B cell (primary cell): ENCODE measurements at regions of chr13 and their contacts with region 1.

Region 1: GRCh38 chr13:27919934-27920676 is at the start of gene PDX1:
- DNase-seq: peak; percentile 55
- ATAC-seq: peak; percentile 44
- H3K4me3 ChIP-seq: peak within 1 kb of the TSS in 4 of 5 experiments; percentile 27 to 61 (median 50)
- H3K4me3 Mint-ChIP-seq: peak within 1 kb of the TSS; percentile 81
- H3K27ac ChIP-seq: no peak within 1 kb of the TSS
- H3K27ac Mint-ChIP-seq: no peak within 1 kb of the TSS
- H3K4me1 ChIP-seq: peaks cover 59 to 75% of the 10 kb centered on the region in 2 donors
- H3K4me1 Mint-ChIP-seq: peaks cover 40% of the 10 kb centered on the region
- H3K27me3 ChIP-seq: peaks cover 0 to 95% (median 76%) of the 10 kb centered on the region in 4 experiments
- H3K27me3 Mint-ChIP-seq: peaks cover 66% of the 10 kb centered on the region
- CTCF ChIP-seq: no peak
- total RNA-seq, gene PDX1: not detected in 2 replicates

Region 2: DNA sequence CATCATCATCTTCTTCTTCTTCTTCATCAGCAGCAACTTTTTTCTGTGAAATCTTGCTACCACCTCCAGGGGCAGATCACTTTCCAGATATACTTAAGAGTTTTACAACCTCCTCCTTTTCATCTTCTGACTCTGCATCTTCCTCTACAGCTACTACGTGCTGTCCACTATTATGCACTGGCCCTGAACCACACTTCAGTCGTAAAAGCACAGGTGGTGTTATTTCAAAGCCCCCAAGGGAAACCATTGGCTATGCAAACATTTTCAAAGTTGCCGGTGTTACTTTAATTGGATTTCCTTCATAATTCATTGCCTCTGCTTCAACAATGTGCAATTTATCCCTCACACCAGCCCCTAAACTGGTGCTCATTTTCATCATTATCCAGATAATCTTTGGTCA is 223.4 kb before region 1 on chr13:
- CTCF ChIA-PET with region 1: no interaction called
- POLR2A ChIA-PET with region 1: no interaction called
- intact Hi-C with region 1: no loop called
- DNase-seq: no peak
- ATAC-seq: no peak
- H3K4me3 ChIP-seq: no peak overlapping the region
- H3K4me3 Mint-ChIP-seq: no peak overlapping the region
- H3K27ac ChIP-seq: no peak overlapping the region
- H3K27ac Mint-ChIP-seq: no peak overlapping the region
- H3K4me1 ChIP-seq: no peaks in the 10 kb centered on the region
- H3K4me1 Mint-ChIP-seq: no peaks in the 10 kb centered on the region
- H3K27me3 ChIP-seq: peaks cover 0 to 3% (median 0%) of the 10 kb centered on the region in 4 experiments
- H3K27me3 Mint-ChIP-seq: peaks cover 29% of the 10 kb centered on the region
- CTCF ChIP-seq: no peak

Region 3: GRCh38 chr13:27792393-27793218 is 127.5 kb before region 1 on chr13 and contains the start of gene GSX1:
- CTCF ChIA-PET with region 1: no interaction called
- POLR2A ChIA-PET with region 1: no interaction called
- intact Hi-C with region 1: loop called (anchors 5 kb)
- DNase-seq: peak; percentile 63
- ATAC-seq: peak; percentile 67
- H3K4me3 ChIP-seq: peak within 1 kb of the TSS; percentile 40 to 66 (median 51)
- H3K4me3 Mint-ChIP-seq: peak within 1 kb of the TSS; percentile 84
- H3K27ac ChIP-seq: no peak within 1 kb of the TSS
- H3K27ac Mint-ChIP-seq: no peak within 1 kb of the TSS
- H3K4me1 ChIP-seq: peaks cover 35 to 56% of the 10 kb centered on the region in 2 donors
- H3K4me1 Mint-ChIP-seq: peaks cover 40% of the 10 kb centered on the region
- H3K27me3 ChIP-seq: peaks cover 2 to 94% (median 67%) of the 10 kb centered on the region in 4 experiments
- H3K27me3 Mint-ChIP-seq: peaks cover 73% of the 10 kb centered on the region
- CTCF ChIP-seq: no peak
- total RNA-seq, gene GSX1: not detected in 2 replicates

Region 4: DNA sequence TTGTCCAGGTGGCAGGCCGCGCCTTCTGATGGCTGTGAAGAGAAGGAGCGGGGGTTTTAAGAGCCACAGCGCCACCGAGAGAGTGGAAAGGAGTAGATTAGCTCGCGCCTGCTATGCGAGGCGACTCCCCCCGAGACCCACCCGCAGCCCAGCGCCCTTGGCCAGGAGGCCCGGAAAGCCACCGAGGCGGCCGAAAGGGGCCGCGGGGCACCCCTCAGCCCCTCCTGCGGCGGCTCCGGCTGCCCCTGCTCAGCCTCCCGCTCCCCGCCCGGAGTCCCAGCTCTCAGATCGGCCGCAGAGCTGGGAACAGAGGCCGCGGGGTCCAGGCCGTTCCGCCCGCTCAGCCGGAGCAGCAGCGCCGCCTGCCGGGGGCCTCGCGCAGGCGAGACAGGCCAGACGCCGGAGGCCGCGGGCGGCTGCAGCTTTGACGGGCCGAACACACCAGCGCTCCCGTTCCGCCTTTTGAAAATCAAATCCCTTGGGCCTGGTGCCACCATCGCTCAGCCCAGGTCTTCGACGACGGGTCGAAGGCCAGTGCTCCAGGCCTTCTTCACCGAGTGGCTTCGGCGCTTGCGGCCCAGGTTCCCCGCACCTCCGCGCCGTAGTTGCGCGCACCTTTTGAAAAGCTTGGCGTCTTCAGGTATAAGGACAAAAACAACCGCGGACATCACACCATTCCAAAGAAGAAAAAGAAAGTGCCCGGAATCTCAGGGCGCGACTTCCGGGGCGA is 33.7 kb after region 1 on chr13:
- CTCF ChIA-PET with region 1: interaction called, 12 read pairs
- POLR2A ChIA-PET with region 1: no interaction called
- intact Hi-C with region 1: loop called (anchors 2 kb)
- DNase-seq: peak; percentile 81
- ATAC-seq: peak; percentile 88
- H3K4me3 ChIP-seq: peak overlapping the region in 4 of 5 experiments; percentile 31 to 53 (median 43)
- H3K4me3 Mint-ChIP-seq: peak overlapping the region; percentile 86
- H3K27ac ChIP-seq: no peak overlapping the region
- H3K27ac Mint-ChIP-seq: no peak overlapping the region
- H3K4me1 ChIP-seq: peaks cover 21 to 25% of the 10 kb centered on the region in 2 donors
- H3K4me1 Mint-ChIP-seq: peaks cover 15% of the 10 kb centered on the region
- H3K27me3 ChIP-seq: peaks cover 0 to 58% (median 44%) of the 10 kb centered on the region in 4 experiments
- H3K27me3 Mint-ChIP-seq: peaks cover 74% of the 10 kb centered on the region
- CTCF ChIP-seq: peak; percentile 86

Region 5: DNA sequence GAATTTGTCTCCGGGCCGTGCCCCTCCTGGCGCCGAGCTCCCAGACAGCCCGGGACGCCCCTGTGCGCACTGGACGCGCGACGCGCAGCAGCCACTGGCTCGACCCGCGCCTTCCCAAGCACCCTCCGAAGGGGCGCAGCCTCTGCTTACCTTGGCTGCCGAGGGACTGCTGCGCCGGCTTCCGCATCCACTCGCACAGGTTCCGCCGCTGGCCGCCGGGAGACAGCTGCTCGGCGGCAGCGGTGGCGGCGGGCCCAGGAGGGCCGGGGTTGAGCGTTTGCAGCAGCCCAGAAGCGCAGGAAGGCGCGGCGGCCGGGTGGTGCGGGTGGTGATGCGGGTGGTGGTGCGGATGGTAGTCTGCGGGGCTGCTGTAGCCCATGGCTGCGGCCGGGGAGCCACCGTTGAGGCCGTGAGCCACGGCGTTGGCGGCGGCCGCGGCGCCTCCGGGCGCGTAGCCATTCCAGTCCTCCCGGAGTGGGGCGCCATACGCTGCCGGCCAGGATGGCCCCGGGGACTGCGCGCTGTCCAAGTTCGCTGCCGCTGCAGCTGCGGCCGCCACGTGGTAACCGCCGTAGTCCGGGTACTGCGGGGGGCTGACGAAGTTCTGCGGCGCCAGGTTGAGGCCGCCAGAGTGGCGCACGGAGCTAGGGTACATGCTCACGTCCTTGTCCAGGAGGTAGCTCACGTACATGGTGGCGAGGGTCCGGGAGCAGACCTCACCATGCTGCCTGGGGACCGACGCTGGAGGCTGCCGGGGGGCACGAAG is 48.4 kb after region 1 on chr13:
- CTCF ChIA-PET with region 1: no interaction called
- POLR2A ChIA-PET with region 1: no interaction called
- intact Hi-C with region 1: loop called (anchors 5 kb)
- DNase-seq: peak; percentile 54
- ATAC-seq: no peak
- H3K4me3 ChIP-seq: peak overlapping the region in 3 of 5 experiments; percentile 25 to 41 (median 27)
- H3K4me3 Mint-ChIP-seq: no peak overlapping the region
- H3K27ac ChIP-seq: no peak overlapping the region
- H3K27ac Mint-ChIP-seq: no peak overlapping the region
- H3K4me1 ChIP-seq: peaks cover 43 to 56% of the 10 kb centered on the region in 2 donors
- H3K4me1 Mint-ChIP-seq: peaks cover 34% of the 10 kb centered on the region
- H3K27me3 ChIP-seq: peaks cover 0 to 88% (median 66%) of the 10 kb centered on the region in 4 experiments
- H3K27me3 Mint-ChIP-seq: peaks cover 77% of the 10 kb centered on the region
- CTCF ChIP-seq: no peak